Heart left ventricle (tissue), 16 donors: ENCODE measurements at regions of chr15 and their contacts with region 1.

Region 1: GRCh38 chr15:42548253-42549031 is at the starts of genes HAUS2 and LRRC57:
- DNase-seq: peak; percentile 89 to 95 (median 91)
- ATAC-seq: peak; percentile 93 to 97 (median 96)
- H3K4me3 ChIP-seq: peak within 1 kb of the TSS; percentile 74 to 98 (median 90)
- H3K27ac ChIP-seq: peak within 1 kb of the TSS; percentile 18 to 96 (median 90)
- H3K4me1 ChIP-seq: peaks cover 0 to 54% (median 22%) of the 10 kb centered on the region in 12 donors
- H3K27me3 ChIP-seq: no peaks in the 10 kb centered on the region
- CTCF ChIP-seq: no peak
- POLR2A ChIP-seq: peak in 1 of 2 donors; percentile 77
- total RNA-seq, gene HAUS2: 10.5 to 27.8 (median 13.7) TPM
- total RNA-seq, gene LRRC57: 10.6 to 25.9 (median 20.0) TPM

Region 2: DNA sequence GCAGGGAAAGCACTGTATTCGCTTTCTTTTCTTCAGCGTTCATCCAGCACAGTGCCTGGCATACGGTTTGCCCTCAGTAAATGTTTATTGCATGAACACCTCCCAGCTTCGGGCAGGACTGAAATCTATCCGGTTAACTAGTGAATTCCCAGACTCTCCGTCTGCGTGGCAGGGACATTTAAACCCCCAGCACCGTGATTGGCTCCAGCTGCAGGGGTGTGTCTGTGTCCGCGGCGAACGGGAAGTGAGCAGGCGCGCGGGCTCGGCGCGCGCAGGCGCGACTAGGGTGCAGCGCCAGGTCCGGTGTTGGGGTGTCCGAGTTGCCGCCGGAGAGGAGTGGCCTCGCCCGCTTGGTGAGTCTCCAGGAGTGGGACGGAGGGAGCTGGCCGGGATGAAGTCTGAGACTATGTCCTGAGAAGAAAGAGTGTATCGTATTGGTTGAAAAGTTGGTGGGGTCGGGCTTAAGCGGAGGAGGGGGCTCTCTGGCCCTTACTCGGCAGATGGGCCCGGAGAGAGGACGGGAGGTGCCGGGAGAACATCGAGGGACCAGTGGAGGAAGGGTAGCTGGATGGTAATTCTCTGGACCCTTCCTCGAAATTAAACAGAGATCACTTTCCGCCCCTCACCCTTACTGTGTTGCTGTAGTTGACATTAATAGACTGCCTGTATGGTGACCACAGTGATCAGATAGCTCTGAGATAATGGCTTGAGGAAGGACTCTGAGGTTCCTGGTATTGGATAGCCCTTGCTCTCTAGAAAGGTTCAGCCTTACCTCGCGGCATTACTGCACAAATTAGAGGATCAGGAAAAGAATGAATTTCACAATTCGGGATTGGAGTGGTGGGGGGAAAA is 52.9 kb before region 1 on chr15 and contains the start of gene SNAP23:
- intact Hi-C with region 1: loop called in 2 of 10 experiments (anchors 5 kb)
- DNase-seq: peak; percentile 93 to 96 (median 95)
- ATAC-seq: peak; percentile 91 to 97 (median 96)
- H3K4me3 ChIP-seq: peak within 1 kb of the TSS; percentile 43 to 87 (median 74)
- H3K27ac ChIP-seq: peak within 1 kb of the TSS; percentile 82 to 97 (median 93)
- H3K4me1 ChIP-seq: peaks cover 0 to 87% (median 41%) of the 10 kb centered on the region in 12 donors
- H3K27me3 ChIP-seq: no peaks in the 10 kb centered on the region
- CTCF ChIP-seq: no peak
- POLR2A ChIP-seq: peak; percentile 17 to 89
- total RNA-seq, gene SNAP23: 29.9 to 74.8 (median 43.3) TPM

Region 3: GRCh38 chr15:42619656-42620371 is 71.4 kb after region 1 on chr15:
- intact Hi-C with region 1: no loop called
- DNase-seq: no peak
- ATAC-seq: no peak
- H3K4me3 ChIP-seq: no peak overlapping the region
- H3K27ac ChIP-seq: no peak overlapping the region
- H3K4me1 ChIP-seq: peaks cover 0 to 7% (median 0%) of the 10 kb centered on the region in 12 donors
- H3K27me3 ChIP-seq: no peaks in the 10 kb centered on the region
- CTCF ChIP-seq: no peak
- POLR2A ChIP-seq: no peak

Region 4: DNA sequence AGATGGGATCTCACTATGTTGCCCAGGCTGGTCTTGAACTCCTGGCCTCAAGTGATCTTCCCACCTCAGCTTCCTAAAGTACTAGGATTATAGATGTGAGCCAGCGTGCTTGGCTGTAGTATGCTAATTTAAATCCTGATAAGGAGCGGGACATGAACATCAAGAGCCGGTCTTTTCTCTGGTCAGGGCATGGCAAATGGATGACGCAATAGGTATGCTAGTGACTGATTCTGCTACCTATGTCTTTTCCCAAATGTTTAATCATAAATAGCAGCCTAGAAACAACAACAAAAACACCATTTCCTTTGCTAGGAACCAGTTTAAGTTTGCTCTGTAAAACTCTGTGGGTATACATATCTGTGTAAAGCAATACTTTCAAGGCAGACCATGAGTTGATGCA is 91.7 kb after region 1 on chr15:
- intact Hi-C with region 1: loop called in 1 of 10 experiments (anchors 10 kb)
- DNase-seq: no peak
- ATAC-seq: no peak
- H3K4me3 ChIP-seq: no peak overlapping the region
- H3K27ac ChIP-seq: no peak overlapping the region
- H3K4me1 ChIP-seq: no peaks in the 10 kb centered on the region
- H3K27me3 ChIP-seq: no peaks in the 10 kb centered on the region
- CTCF ChIP-seq: no peak
- POLR2A ChIP-seq: no peak

Region 5: DNA sequence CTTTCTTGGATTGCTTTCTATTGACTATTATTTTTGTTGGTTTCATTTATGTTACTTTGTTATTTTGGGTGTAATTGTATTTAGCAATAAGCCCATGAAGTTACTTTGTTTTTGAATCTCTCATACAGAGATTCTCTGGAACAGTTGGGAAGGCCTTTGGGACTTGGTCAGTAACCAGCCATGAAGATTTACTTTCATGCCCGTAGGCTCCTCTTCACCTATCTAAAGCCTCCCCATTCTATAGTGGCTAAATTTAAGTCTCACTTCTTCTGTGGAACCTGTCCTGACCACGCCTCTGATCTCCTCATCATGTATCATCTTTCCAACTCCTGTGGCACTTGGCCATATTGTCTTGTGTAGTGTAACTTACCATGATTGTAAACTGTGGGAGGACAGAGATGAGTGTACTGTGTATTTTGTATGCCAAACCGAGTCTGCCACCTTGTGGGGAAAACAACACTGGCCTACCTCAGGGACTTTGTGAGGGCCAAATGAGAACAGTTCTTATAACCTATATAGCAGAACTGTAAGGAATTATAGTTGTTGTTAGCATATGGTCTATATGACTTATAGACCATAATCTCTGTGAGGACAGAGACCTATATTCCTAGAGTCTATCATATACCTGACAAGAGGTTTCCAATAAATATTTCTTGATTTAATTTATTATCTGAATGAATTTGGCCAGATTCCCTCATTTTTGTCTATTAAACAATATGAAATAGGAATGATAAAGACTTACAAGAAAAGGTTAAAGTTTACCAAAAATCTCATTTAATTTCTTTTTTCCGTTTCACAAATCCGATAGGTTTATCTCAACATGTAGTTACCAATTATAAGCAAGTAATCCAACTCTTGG is 102.0 kb after region 1 on chr15:
- intact Hi-C with region 1: loop called in 9 of 10 experiments (anchors 1 to 10 kb)
- DNase-seq: peak in 4 of 5 donors; percentile 47 to 58 (median 55)
- ATAC-seq: peak; percentile 87 to 98 (median 95)
- H3K4me3 ChIP-seq: no peak overlapping the region
- H3K27ac ChIP-seq: no peak overlapping the region
- H3K4me1 ChIP-seq: peaks cover 0 to 16% (median 2%) of the 10 kb centered on the region in 12 donors
- H3K27me3 ChIP-seq: no peaks in the 10 kb centered on the region
- CTCF ChIP-seq: peak; percentile 66 to 92 (median 82)
- POLR2A ChIP-seq: no peak